Heart right ventricle (tissue), 16 donors: ENCODE measurements at regions of chr5 and their contacts with region 1.

Region 1: GRCh38 chr5:145965804-145966203 is 29.4 kb downstream of the SH3RF2 start:
- DNase-seq: no peak
- ATAC-seq: peak in 3 of 8 donors; percentile 20 to 77 (median 67)
- H3K4me3 ChIP-seq: no peak overlapping the region
- H3K27ac ChIP-seq: no peak overlapping the region
- H3K4me1 ChIP-seq: peaks cover 0 to 16% (median 0%) of the 10 kb centered on the region in 9 donors
- H3K27me3 ChIP-seq: no peaks in the 10 kb centered on the region
- CTCF ChIP-seq: no peak

Region 2: DNA sequence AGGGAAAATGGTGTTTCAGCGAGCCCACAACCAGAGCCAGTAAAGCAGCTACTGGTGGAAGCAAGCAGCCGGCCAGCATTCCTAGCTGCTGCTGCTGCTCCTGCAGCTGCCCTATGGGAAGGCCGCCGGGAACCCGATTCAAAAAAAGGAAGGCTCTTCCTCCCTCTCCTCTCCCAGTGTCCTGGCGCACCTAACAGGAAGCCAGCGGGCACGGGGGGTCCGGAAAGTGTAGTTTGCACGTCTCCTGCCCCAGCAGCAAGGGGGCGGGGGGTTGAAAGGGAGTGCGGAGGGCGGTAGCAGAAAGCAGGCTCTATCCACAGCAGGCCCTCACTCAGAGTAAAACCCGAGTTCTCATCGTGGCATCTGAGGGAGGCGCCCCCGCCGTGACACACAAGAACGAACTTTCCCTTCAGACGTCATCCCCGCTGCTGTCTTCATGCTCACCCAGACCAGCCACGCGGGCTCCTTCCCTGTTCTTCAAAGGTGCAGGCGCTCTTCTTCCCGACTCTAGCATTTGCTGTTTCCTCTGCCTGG is 109.5 kb before region 1 on chr5:
- intact Hi-C with region 1: no loop called
- DNase-seq: peak; percentile 23 to 33
- ATAC-seq: peak; percentile 64 to 86 (median 80)
- H3K4me3 ChIP-seq: peak overlapping the region in 9 of 10 donors; percentile 8 to 53 (median 47)
- H3K27ac ChIP-seq: peak overlapping the region in 6 of 10 donors; percentile 1 to 48 (median 34)
- H3K4me1 ChIP-seq: peaks cover 0 to 18% (median 4%) of the 10 kb centered on the region in 9 donors
- H3K27me3 ChIP-seq: no peaks in the 10 kb centered on the region
- CTCF ChIP-seq: peak in 2 of 9 donors; percentile 15 to 27

Region 3: DNA sequence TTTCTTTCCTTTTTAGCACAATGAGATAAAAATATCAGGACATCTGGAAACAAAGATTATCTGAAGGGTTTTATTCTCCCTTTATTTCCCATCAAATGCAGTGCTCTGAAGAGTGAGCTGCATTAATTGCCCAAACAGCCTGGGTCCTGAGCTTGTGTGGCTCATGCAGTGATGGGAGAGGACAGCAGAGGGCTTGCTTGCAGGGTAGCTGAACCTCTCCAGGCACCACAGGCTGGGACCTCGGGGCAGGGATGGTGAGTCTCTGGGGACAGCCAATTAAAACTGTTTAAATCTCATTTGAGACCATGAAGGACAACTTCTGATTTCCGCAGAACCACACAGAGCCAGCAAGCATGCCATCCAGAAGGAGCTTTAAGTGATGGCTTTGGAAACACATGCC is 68.3 kb after region 1 on chr5:
- intact Hi-C with region 1: loop called in 1 of 10 experiments (anchors 10 kb)
- DNase-seq: no peak
- ATAC-seq: no peak
- H3K4me3 ChIP-seq: no peak overlapping the region
- H3K27ac ChIP-seq: no peak overlapping the region
- H3K4me1 ChIP-seq: peaks cover 0 to 5% (median 0%) of the 10 kb centered on the region in 9 donors
- H3K27me3 ChIP-seq: no peaks in the 10 kb centered on the region
- CTCF ChIP-seq: no peak